ENCODE measurements at regions of chr1 and their contacts with region 1.

Region 1: DNA sequence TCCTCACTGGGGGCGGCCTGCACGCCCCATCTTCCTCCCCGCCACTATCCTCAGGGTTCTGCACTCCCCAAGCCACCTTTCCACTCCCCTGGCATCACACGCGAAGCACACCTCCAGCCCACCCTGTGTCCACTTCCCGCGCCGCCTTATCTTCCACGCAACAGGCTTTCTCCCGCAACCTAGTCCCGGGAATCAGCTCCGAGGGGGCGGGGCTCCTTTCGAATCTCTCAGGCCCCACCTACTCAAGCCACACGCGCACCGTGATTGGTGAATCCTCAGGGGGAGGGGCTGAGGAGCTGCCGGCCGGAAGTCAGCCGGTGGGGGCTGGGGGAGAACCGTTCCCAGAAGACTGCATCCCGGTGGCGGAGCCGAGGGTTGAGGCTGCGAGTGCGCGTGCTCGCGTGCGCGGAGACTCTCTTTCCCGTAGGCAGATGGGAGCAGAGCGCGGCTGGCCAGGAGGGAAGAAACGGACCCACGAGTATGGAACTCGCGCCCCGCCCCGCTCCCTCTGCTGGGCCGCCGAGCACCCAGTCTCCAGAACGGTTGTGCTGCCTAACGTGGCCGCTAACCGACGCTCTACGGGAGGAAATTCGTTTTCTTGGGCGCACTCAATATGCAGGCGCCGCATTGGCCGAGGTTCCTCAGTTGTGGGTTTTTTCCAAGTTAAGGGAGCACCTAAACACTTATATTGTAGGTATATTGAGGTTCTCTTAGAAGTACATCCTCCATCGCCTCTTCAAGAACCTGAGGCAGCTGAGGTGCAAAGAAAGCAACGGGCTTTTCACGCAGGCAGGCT is at the start of gene PSRC1:
- DNase-seq: peak; percentile 88
- ATAC-seq: peak; percentile 98
- H3K4me3 Mint-ChIP-seq: peak within 1 kb of the TSS; percentile 96
- H3K27ac Mint-ChIP-seq: peak within 1 kb of the TSS; percentile 91
- H3K4me1 Mint-ChIP-seq: peaks cover 13% of the 10 kb centered on the region
- H3K27me3 Mint-ChIP-seq: peaks cover 3% of the 10 kb centered on the region
- CTCF ChIP-seq: no peak
- total RNA-seq, gene PSRC1: 0.69 TPM in 1 of 2 replicates, not detected in the other

Region 2: DNA sequence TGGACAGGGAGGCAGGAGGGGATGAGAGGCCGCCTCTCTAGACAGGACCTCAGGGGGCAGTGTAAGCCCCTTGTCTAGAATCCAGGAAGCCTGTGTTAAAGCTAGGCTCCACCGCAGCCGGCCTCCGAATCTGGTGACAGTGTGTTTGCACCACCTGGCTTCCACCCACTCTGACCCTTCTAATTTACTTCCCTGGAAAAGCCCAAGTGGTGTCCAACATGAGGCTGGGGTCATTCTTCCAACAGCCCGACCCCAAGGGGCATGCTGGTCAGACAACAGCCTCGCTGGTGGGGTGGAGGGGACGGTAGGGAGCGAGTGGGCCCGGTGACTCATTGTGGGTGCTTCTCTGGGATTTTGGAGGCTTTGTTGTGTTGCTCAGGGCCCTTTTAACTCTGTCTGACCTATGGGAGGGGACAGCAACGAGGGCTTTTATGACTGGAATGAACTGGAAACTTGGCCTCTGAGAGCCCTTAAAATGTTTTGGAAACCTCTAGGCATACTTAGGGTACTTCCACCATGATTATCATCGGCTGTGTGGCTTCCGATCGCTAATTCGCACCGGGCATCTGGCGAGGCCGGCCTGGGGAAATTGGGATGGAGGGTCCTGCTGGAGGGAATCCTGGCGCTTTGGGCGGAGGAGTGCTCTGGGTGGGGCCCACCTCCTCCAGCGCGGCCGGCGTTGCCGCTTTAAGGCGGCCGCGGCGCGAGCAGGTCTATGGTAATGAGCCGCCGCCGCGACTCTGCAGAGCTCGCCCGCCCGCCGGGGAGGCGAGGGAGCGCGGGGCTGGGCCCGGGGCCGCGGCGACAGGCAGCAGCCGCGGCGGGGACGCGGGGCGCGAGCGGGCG is 34.1 kb before region 1 on chr1 and contains the start of gene CELSR2:
- CTCF ChIA-PET with region 1: no interaction called
- POLR2A ChIA-PET with region 1: no interaction called
- intact Hi-C with region 1: loop called (anchors 1 kb)
- DNase-seq: peak; percentile 54
- ATAC-seq: peak; percentile 89
- H3K4me3 Mint-ChIP-seq: peak within 1 kb of the TSS; percentile 71
- H3K27ac Mint-ChIP-seq: no peak within 1 kb of the TSS
- H3K4me1 Mint-ChIP-seq: peaks cover 12% of the 10 kb centered on the region
- H3K27me3 Mint-ChIP-seq: peaks cover 23% of the 10 kb centered on the region
- CTCF ChIP-seq: no peak
- total RNA-seq, gene CELSR2: 0.81 and 1.1 TPM in 2 replicates

Region 3: GRCh38 chr1:109263597-109264398 is 19.4 kb before region 1 on chr1:
- CTCF ChIA-PET with region 1: interaction called, 3 read pairs
- POLR2A ChIA-PET with region 1: no interaction called
- intact Hi-C with region 1: loop called (anchors 1 kb)
- DNase-seq: peak; percentile 63
- ATAC-seq: peak; percentile 97
- H3K4me3 Mint-ChIP-seq: no peak overlapping the region
- H3K27ac Mint-ChIP-seq: no peak overlapping the region
- H3K4me1 Mint-ChIP-seq: peaks cover 4% of the 10 kb centered on the region
- H3K27me3 Mint-ChIP-seq: peaks cover 2% of the 10 kb centered on the region
- CTCF ChIP-seq: no peak

Region 4: GRCh38 chr1:109307274-109308021 is 24.3 kb after region 1 on chr1:
- CTCF ChIA-PET with region 1: interaction called, 12 read pairs
- POLR2A ChIA-PET with region 1: interaction called, 3 read pairs
- intact Hi-C with region 1: loop called (anchors 1 kb)
- DNase-seq: peak; percentile 41
- ATAC-seq: peak; percentile 98
- H3K4me3 Mint-ChIP-seq: peak overlapping the region; percentile 60
- H3K27ac Mint-ChIP-seq: peak overlapping the region; percentile 80
- H3K4me1 Mint-ChIP-seq: peaks cover 19% of the 10 kb centered on the region
- H3K27me3 Mint-ChIP-seq: peaks cover 5% of the 10 kb centered on the region
- CTCF ChIP-seq: no peak

Region 5: GRCh38 chr1:109483672-109484518 is 200.7 kb after region 1 on chr1 and contains the start of gene ATXN7L2:
- CTCF ChIA-PET with region 1: no interaction called
- POLR2A ChIA-PET with region 1: interaction called, 5 read pairs
- intact Hi-C with region 1: loop called (anchors 5 kb)
- DNase-seq: peak; percentile 90
- ATAC-seq: peak; percentile 79
- H3K4me3 Mint-ChIP-seq: peak within 1 kb of the TSS; percentile 94
- H3K27ac Mint-ChIP-seq: peak within 1 kb of the TSS; percentile 91
- H3K4me1 Mint-ChIP-seq: peaks cover 27% of the 10 kb centered on the region
- H3K27me3 Mint-ChIP-seq: peaks cover 16% of the 10 kb centered on the region
- CTCF ChIP-seq: no peak
- total RNA-seq, gene ATXN7L2: 7.5 and 9.0 TPM in 2 replicates

Region 6: DNA sequence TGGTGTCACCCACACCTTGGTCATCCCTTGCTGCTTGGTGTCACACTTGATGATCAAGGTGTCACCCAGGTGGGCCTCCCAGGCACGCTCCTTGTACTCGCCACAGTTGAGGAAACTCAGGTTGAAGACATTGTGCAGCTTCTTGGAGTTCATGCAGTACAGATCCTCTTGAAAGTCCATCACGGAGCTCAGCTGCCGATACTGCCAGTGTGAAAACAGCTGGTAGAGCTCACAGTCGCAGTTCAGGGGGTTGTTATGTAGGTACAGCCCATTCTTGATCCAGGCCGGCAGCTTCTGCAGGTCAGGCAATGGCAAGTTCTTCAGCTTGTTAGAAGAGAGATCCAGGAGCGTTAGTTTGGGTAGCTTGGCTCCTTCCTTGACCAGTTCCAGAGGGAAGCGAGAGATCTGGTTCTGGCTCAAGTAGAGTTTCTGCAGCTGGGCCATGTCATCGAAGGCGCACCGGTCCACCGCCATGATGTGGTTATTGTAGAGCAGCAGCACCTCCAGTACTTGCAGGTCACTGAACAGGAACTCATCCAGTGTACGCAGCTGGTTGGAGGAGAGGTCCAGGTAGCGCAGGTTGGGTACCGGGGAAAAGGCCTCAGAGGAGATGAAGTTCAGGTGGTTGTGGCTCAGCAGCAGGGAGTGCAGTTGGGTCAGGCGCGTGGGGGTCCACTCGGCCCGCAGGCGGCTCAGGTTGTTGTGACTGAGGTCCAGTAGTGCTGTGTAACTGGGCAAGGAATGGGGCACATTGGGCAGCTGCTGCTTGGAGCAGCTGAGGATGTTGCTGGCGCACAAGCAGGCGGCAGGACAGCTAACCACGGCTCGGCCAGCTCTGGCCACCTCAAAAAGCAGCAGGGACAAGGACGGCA is 225.1 kb after region 1 on chr1:
- CTCF ChIA-PET with region 1: no interaction called
- POLR2A ChIA-PET with region 1: no interaction called
- intact Hi-C with region 1: no loop called
- DNase-seq: no peak
- ATAC-seq: no peak
- H3K4me3 Mint-ChIP-seq: peak overlapping the region; percentile 80
- H3K27ac Mint-ChIP-seq: no peak overlapping the region
- H3K4me1 Mint-ChIP-seq: peaks cover 15% of the 10 kb centered on the region
- H3K27me3 Mint-ChIP-seq: peaks cover 10% of the 10 kb centered on the region
- CTCF ChIP-seq: no peak